AG04449 (cell line): ENCODE measurements at regions of chr13 and their contacts with region 1.

Region 1: GRCh38 chr13:110915057-110915873 is at the start of gene ANKRD10:
- DNase-seq: peak; percentile 89
- H3K4me3 ChIP-seq: peak within 1 kb of the TSS; percentile 99
- CTCF ChIP-seq: peak; percentile 89

Region 2: GRCh38 chr13:110902370-110902769 is 12.9 kb before region 1 on chr13:
- CTCF ChIA-PET with region 1: interaction called, 43 read pairs
- POLR2A ChIA-PET with region 1: interaction called, 4 read pairs
- DNase-seq: no peak
- H3K4me3 ChIP-seq: no peak overlapping the region
- CTCF ChIP-seq: no peak

Region 3: GRCh38 chr13:111046590-111047141 is 131.4 kb after region 1 on chr13:
- CTCF ChIA-PET with region 1: interaction called, 21 read pairs
- POLR2A ChIA-PET with region 1: no interaction called
- DNase-seq: no peak
- H3K4me3 ChIP-seq: no peak overlapping the region
- CTCF ChIP-seq: no peak

Region 4: GRCh38 chr13:111082240-111082639 is 167.0 kb after region 1 on chr13:
- CTCF ChIA-PET with region 1: no interaction called
- POLR2A ChIA-PET with region 1: no interaction called
- DNase-seq: no peak
- H3K4me3 ChIP-seq: no peak overlapping the region
- CTCF ChIP-seq: no peak